Activated CD4-positive, alpha-beta T cell treated with anti-CD3 and anti-CD28 coated beads, Interleukin-2, amount 10 ng/mL, durations not matched to agents 7 days and 5 days (primary cell): ENCODE measurements at regions of chr14 and their contacts with region 1.

Region 1: DNA sequence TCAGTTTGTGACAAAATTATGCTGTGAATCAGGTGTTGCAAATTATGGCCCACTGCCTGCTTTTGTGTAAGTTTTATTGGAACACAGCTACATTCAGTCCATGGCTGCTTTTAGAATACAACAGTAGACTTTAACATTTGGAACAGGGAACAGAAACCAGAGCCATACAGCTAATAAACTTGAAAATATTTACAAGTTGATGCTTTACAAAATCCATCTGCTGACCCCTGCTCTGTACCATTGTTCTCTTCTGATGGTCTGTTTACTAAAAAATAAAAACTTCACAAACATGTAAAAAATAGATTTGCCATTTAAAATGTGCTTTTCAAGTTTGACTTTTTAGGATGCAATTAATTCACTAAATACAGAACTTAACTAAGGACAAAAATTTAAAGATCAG is 20.8 kb downstream of the PSMA3 start:
- DNase-seq: no peak
- H3K4me3 Mint-ChIP-seq: no peak overlapping the region
- H3K27ac Mint-ChIP-seq: no peak overlapping the region
- H3K4me1 Mint-ChIP-seq: peaks cover 3% of the 10 kb centered on the region
- H3K27me3 Mint-ChIP-seq: no peaks in the 10 kb centered on the region

Region 2: GRCh38 chr14:58275527-58276190 is 10.3 kb after region 1 on chr14:
- CTCF ChIA-PET with region 1: interaction called, 11 read pairs
- POLR2A ChIA-PET with region 1: no interaction called
- DNase-seq: no peak
- H3K4me3 Mint-ChIP-seq: no peak overlapping the region
- H3K27ac Mint-ChIP-seq: peak overlapping the region; percentile 81
- H3K4me1 Mint-ChIP-seq: peaks cover 37% of the 10 kb centered on the region
- H3K27me3 Mint-ChIP-seq: no peaks in the 10 kb centered on the region

Region 3: DNA sequence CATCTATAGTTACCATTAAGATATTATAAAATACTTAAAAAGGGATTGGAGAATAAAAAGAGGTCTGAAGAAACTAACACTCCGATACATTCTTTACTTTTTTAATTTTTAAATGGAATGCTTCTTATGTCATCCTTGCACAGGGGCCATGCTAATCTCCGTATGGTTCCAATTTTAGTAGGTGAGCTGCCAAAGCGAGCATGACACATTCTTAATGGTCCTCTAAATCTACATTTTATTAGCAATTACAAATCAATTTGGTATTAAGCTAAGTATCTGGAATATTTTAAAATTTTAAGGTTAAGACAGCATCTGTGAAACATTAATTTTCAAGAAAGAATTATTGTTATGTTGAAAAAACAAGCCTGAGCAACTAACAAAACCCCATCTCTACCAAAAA is 26.8 kb after region 1 on chr14:
- CTCF ChIA-PET with region 1: no interaction called
- POLR2A ChIA-PET with region 1: no interaction called
- DNase-seq: no peak
- H3K4me3 Mint-ChIP-seq: no peak overlapping the region
- H3K27ac Mint-ChIP-seq: no peak overlapping the region
- H3K4me1 Mint-ChIP-seq: peaks cover 59% of the 10 kb centered on the region
- H3K27me3 Mint-ChIP-seq: no peaks in the 10 kb centered on the region